ENCODE measurements at regions of chr19 and their contacts with region 1.

Region 1: DNA sequence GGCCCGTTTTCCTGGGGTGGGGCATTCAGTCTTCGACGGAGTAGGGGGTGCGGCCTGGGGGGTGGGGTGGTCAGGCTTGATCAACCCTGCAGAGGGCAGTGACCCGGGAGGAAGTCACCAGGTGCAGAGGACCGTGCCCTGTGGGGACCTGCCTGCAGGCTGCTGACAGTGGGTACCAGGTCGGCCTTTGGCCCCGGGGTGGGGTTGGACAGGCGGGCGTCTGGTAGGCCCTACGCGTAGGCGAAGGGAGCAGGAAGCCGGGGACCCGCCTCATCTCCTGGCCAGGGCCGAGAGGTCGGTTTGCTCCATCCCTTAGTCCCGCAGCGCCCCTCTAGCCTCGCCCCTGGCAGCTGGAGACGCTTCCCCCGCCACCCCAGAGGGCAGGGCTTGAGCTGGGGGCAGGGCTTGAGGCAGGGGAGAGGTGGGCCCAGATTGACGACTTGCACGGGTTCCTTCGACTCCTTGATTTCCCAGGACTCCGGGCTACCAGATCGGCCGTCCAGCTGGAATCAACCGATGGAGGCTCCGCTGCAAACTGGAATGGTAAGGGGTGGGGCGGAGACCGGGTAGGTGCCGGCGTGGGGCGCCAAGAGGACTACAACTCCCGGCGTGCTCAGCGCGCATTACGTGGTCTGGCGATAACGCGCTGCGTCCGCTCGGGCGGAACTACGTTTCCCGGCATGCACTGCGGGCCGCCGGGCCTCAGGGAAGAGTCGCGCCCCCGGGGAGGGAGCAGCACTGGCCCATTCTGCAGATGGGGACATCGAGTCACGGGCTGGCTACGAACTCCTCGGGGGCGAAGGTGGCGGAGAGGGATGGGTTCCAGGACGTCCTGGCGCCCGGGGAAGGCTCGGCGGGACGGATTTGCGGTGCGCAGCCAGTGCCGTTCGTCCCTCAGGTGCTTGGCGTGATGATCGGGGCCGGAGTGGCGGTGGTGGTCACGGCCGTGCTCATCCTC is at the start of gene PNPLA6:
- DNase-seq: peak; percentile 92
- H3K4me3 Mint-ChIP-seq: peak within 1 kb of the TSS; percentile 95
- H3K27ac Mint-ChIP-seq: peak within 1 kb of the TSS; percentile 87
- H3K4me1 Mint-ChIP-seq: no peaks in the 10 kb centered on the region
- H3K27me3 Mint-ChIP-seq: no peaks in the 10 kb centered on the region
- CTCF ChIP-seq: no peak
- total RNA-seq, gene PNPLA6: 75.8 and 96.1 TPM in 2 replicates

Region 2: GRCh38 chr19:7349961-7350711 is 185.2 kb before region 1 on chr19:
- CTCF ChIA-PET with region 1: interaction called, 9 read pairs
- POLR2A ChIA-PET with region 1: interaction called, 3 read pairs
- intact Hi-C with region 1: loop called (anchors 10 kb)
- DNase-seq: no peak
- H3K4me3 Mint-ChIP-seq: no peak overlapping the region
- H3K27ac Mint-ChIP-seq: no peak overlapping the region
- H3K4me1 Mint-ChIP-seq: no peaks in the 10 kb centered on the region
- H3K27me3 Mint-ChIP-seq: peaks cover 19% of the 10 kb centered on the region
- CTCF ChIP-seq: no peak

Region 3: DNA sequence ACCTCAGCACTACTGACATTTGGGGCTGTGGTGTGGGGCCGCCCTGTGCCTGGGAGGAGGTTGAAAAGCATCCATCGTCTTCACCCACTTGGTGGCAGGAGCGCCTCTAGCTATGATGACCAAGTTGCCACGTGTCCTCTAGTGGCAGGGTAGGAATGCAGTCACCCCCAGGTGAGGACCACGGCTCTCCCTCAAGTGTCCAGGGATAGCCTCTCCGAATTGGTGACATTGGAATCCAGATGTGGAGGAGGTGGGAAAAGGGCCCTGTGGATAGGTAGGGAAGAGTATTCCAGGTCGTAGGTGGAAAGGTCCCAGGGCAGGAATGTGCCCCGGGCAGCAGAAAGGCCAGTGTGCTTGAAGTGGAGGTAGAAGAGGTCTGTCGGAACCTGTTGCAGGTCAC is 149.0 kb before region 1 on chr19:
- CTCF ChIA-PET with region 1: no interaction called
- POLR2A ChIA-PET with region 1: interaction called, 4 read pairs
- intact Hi-C with region 1: loop called (anchors 5 kb)
- DNase-seq: peak; percentile 53
- H3K4me3 Mint-ChIP-seq: no peak overlapping the region
- H3K27ac Mint-ChIP-seq: peak overlapping the region; percentile 35
- H3K4me1 Mint-ChIP-seq: peaks cover 12% of the 10 kb centered on the region
- H3K27me3 Mint-ChIP-seq: no peaks in the 10 kb centered on the region
- CTCF ChIP-seq: peak; percentile 6

Region 4: GRCh38 chr19:7522072-7522922 is 13.0 kb before region 1 on chr19 and contains the start of gene MCOLN1:
- CTCF ChIA-PET with region 1: interaction called, 3 read pairs
- POLR2A ChIA-PET with region 1: interaction called, 56 read pairs
- intact Hi-C with region 1: loop called (anchors 1 kb)
- DNase-seq: peak; percentile 97
- H3K4me3 Mint-ChIP-seq: peak within 1 kb of the TSS; percentile 70
- H3K27ac Mint-ChIP-seq: peak within 1 kb of the TSS; percentile 33
- H3K4me1 Mint-ChIP-seq: peaks cover 9% of the 10 kb centered on the region
- H3K27me3 Mint-ChIP-seq: no peaks in the 10 kb centered on the region
- CTCF ChIP-seq: no peak
- total RNA-seq, gene MCOLN1: 10.8 and 13.9 TPM in 2 replicates

Measured in MCF 10A (cell line).